Gastrocnemius medialis (tissue), 4 donors: ENCODE measurements at regions of chr3 and their contacts with region 1.

Region 1: DNA sequence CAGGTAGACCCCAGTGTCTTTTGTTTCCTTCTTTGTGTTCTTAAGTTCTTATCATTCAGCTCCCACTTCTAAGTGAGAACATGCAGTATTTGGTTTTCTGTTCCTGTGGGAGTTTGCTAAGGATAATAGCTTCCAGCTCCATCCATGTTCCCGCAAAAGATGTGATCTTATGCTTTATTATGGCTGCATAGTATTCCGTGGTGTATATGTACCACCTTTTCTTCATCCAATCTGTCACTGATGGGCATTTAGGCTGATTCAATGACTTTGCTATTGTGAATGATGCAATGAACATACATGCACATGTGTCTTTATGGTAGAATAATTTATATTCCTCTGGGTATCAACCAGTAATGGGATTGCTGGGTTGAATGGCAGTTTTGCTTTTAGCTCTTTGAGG is 24.4 kb downstream of the MCCC1 start:
- DNase-seq: no peak
- ATAC-seq: no peak
- H3K4me3 ChIP-seq: no peak overlapping the region
- H3K27ac ChIP-seq: no peak overlapping the region
- H3K4me1 ChIP-seq: no peaks in the 10 kb centered on the region
- H3K27me3 ChIP-seq: no peaks in the 10 kb centered on the region
- CTCF ChIP-seq: no peak
- POLR2A ChIP-seq: no peak

Region 2: GRCh38 chr3:182105875-182106274 is 969.0 kb before region 1 on chr3:
- in situ Hi-C with region 1: no loop called
- intact Hi-C with region 1: no loop called
- DNase-seq: no peak
- ATAC-seq: no peak
- H3K4me3 ChIP-seq: no peak overlapping the region
- H3K27ac ChIP-seq: no peak overlapping the region
- H3K4me1 ChIP-seq: no peaks in the 10 kb centered on the region
- H3K27me3 ChIP-seq: no peaks in the 10 kb centered on the region
- CTCF ChIP-seq: no peak
- POLR2A ChIP-seq: no peak

Region 3: DNA sequence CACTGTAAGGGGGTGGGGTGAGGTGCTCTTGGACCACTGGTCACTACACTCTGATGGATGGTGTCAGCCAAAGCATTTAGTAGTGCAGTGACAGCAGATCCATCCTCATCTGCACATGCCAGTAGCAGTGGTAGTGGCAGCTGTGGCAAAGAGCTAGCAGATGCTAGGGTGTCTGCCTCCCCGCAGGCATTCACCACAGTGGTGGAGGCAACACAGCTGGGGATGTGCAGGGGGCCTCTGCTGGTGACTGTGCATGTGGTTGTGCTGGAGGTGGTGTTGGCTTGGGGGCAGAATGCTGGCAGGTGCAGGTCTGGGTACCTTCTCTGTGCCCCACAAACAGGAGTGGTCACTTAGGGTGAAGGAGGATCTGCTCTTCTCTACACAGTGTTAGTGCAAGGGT is 75.1 kb before region 1 on chr3:
- in situ Hi-C with region 1: loop called in 1 of 4 experiments (anchors 5 kb)
- intact Hi-C with region 1: no loop called
- DNase-seq: no peak
- ATAC-seq: no peak
- H3K4me3 ChIP-seq: no peak overlapping the region
- H3K27ac ChIP-seq: no peak overlapping the region
- H3K4me1 ChIP-seq: no peaks in the 10 kb centered on the region
- H3K27me3 ChIP-seq: no peaks in the 10 kb centered on the region
- CTCF ChIP-seq: no peak
- POLR2A ChIP-seq: no peak